Activated CD8-positive, alpha-beta T cell treated with anti-CD3 and anti-CD28 coated beads, Interleukin-2, amount 10 ng/mL, durations not matched to agents 7 days and 5 days (primary cell): ENCODE measurements at regions of chr7 and their contacts with region 1.

Region 1: GRCh38 chr7:138886501-138886917 is 88.5 kb upstream of the ATP6V0A4 start:
- DNase-seq: peak; percentile 75
- ATAC-seq: peak; percentile 80
- H3K4me3 Mint-ChIP-seq: no peak overlapping the region
- H3K27ac Mint-ChIP-seq: peak overlapping the region; percentile 78
- H3K4me1 Mint-ChIP-seq: peaks cover 25% of the 10 kb centered on the region
- H3K27me3 Mint-ChIP-seq: no peaks in the 10 kb centered on the region

Region 2: GRCh38 chr7:138738551-138739335 is 147.8 kb before region 1 on chr7:
- CTCF ChIA-PET with region 1: interaction called, 13 read pairs
- POLR2A ChIA-PET with region 1: no interaction called
- DNase-seq: peak; percentile 90
- ATAC-seq: peak; percentile 97
- H3K4me3 Mint-ChIP-seq: no peak overlapping the region
- H3K27ac Mint-ChIP-seq: peak overlapping the region; percentile 14
- H3K4me1 Mint-ChIP-seq: peaks cover 13% of the 10 kb centered on the region
- H3K27me3 Mint-ChIP-seq: no peaks in the 10 kb centered on the region

Region 3: DNA sequence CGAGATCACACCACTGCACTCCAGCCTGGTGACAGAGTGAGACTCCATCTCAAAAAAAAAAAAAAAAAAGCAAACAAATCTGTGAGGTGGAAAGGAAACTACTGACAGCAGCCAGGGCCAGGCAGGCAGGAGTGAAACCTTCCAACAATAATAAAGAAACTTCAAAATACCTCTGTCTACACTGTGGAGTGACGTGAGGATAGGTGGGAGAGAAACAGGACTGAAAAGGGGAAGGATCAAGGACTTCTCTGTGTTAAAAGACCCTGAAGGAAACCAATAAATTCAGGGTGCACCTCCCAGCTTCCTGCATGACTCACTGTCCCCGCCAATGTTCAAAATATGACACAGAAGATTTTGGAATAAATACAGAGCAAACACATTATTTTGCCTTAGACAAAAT is 11.7 kb after region 1 on chr7:
- CTCF ChIA-PET with region 1: interaction called, 154 read pairs
- POLR2A ChIA-PET with region 1: interaction called, 8 read pairs
- DNase-seq: peak; percentile 51
- ATAC-seq: peak; percentile 59
- H3K4me3 Mint-ChIP-seq: peak overlapping the region; percentile 39
- H3K27ac Mint-ChIP-seq: peak overlapping the region; percentile 83
- H3K4me1 Mint-ChIP-seq: peaks cover 51% of the 10 kb centered on the region
- H3K27me3 Mint-ChIP-seq: peaks cover 12% of the 10 kb centered on the region

Region 4: DNA sequence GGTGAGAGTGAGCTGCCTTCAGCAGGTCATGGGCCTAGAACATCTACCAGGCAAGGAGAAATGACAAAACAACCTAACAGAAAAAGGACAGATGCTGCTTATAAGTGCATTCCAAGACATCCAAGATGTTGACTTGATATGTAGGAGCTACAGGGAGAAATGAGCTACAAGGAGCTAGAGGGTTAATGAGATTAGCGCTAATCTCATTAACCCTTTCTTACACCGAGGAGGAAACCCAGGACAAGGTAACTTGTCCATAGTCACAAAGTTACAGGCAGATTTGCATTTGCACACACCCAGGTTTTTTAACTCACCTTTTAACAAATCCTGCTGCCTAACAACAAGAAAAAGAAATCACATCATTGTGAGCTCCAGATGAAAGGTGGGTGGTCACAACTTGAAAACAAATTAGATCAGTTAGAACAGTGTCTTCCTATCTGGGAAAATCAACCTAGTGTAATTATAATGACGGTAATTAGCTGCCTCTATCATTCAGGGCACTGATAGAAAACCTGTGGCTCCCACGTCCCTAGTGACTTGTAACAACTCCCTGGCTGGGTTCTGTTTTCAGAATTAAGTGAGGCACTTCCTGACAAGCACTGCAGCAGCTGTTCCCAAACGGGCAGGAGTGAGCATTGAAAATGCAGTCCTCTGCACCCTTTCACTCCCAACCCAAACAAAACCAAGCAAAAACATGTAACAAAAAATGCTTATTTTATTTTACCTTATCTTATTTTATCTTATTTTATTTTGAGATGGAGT is 89.0 kb after region 1 on chr7:
- CTCF ChIA-PET with region 1: interaction called, 56 read pairs
- POLR2A ChIA-PET with region 1: no interaction called
- DNase-seq: no peak
- ATAC-seq: no peak
- H3K4me3 Mint-ChIP-seq: no peak overlapping the region
- H3K27ac Mint-ChIP-seq: no peak overlapping the region
- H3K4me1 Mint-ChIP-seq: peaks cover 5% of the 10 kb centered on the region
- H3K27me3 Mint-ChIP-seq: peaks cover 38% of the 10 kb centered on the region

Region 5: DNA sequence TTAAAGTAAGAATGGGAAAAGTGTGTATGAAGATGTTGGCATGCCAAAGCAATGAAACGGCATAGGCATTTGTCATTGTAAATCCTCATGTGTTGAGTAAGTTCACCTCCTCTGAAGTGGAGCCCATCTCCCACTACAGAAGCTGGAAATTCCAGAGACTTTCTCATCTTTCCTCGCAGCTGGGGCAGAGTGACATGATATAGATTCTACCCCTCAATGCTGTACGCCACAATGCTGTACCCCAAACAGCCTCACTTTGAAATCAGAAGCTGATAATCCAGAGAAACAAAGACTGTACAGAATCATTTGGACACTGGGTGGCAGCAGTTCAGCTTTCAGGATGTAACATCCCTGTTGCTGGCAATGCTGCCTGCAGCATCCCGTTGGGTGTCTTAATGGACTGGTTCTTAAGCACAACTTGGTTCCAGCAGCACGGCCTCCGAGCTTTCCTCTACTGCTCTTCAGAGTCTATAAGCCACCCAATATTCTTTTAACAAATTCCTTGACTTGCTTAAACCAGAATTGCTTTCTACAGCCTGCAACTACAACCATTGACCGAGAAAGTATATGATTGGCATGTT is 130.5 kb after region 1 on chr7:
- CTCF ChIA-PET with region 1: interaction called, 20 read pairs
- POLR2A ChIA-PET with region 1: no interaction called
- DNase-seq: peak; percentile 81
- ATAC-seq: peak; percentile 100
- H3K4me3 Mint-ChIP-seq: no peak overlapping the region
- H3K27ac Mint-ChIP-seq: no peak overlapping the region
- H3K4me1 Mint-ChIP-seq: peaks cover 12% of the 10 kb centered on the region
- H3K27me3 Mint-ChIP-seq: peaks cover 9% of the 10 kb centered on the region

Region 6: DNA sequence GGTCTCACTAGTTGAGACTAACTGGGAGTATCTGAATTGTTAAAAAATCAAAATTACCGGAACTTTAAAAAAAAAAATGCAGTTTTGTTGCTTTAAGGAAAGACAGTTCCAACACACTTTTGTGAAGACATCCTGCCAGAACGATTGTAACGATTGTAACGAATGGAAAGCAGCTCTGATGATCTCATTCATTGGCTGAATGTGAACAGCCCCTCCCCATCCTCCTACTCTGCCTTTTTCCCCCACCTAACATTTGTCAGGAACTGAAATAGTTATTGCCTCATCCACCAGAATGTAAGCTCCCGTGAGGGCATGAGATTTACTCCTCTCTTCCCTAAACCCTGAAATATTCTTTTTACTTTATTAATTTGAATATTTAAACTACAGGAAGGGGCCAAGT is 172.4 kb after region 1 on chr7:
- CTCF ChIA-PET with region 1: interaction called, 14 read pairs
- POLR2A ChIA-PET with region 1: no interaction called
- DNase-seq: no peak
- ATAC-seq: no peak
- H3K4me3 Mint-ChIP-seq: no peak overlapping the region
- H3K27ac Mint-ChIP-seq: peak overlapping the region; percentile 47
- H3K4me1 Mint-ChIP-seq: peaks cover 46% of the 10 kb centered on the region
- H3K27me3 Mint-ChIP-seq: no peaks in the 10 kb centered on the region

Region 7: DNA sequence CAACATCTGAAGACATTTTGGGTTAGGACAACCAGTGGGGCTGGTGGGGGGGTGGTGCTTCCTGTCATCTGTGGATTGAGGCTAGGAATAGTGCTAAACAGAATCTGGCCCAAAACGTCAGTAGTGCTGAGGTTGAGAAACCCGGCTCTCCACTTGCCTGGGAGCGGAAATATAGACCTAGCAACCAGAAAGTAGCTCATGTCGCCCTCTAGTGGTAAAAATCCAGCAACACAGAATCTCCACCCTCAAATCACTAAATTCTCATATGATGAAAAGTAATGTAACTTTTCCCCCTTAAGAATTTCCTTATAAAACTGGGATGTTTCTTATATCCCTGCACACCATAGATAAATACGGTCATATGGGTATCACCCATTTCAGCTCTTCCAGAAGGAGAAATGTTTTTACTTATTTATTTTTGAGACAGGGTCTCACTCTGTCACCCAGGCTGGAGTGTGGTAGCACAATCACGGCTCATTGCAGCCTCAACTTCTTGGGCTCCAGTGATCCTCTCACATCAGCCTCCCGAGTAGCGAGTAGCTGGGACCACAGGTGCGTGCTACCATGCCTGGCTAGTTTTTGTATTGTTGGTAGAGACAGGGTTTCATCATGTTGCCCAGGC is 188.6 kb after region 1 on chr7:
- CTCF ChIA-PET with region 1: interaction called, 21 read pairs
- POLR2A ChIA-PET with region 1: no interaction called
- DNase-seq: peak; percentile 86
- ATAC-seq: peak; percentile 58
- H3K4me3 Mint-ChIP-seq: peak overlapping the region; percentile 46
- H3K27ac Mint-ChIP-seq: peak overlapping the region; percentile 86
- H3K4me1 Mint-ChIP-seq: peaks cover 76% of the 10 kb centered on the region
- H3K27me3 Mint-ChIP-seq: no peaks in the 10 kb centered on the region